ENCODE measurements at regions of chr2 and their contacts with region 1.

Region 1: GRCh38 chr2:237072067-237072931 is 13.4 kb upstream of the COPS8 start:
- DNase-seq: peak; percentile 57 to 67 (median 62)
- ATAC-seq: peak; percentile 76
- H3K4me3 ChIP-seq: no peak overlapping the region
- H3K27ac ChIP-seq: no peak overlapping the region
- H3K4me1 ChIP-seq: no peaks in the 10 kb centered on the region; a peak in 1 of 5 replicates
- H3K27me3 ChIP-seq: no peaks in the 10 kb centered on the region
- CTCF ChIP-seq: peak; percentile 71 to 83 (median 81)
- EP300 ChIP-seq: no peak
- POLR2A ChIP-seq: no peak
- RAD21 ChIP-seq: peak; percentile 22 to 64; a peak in 3 of 4 replicates

Region 2: DNA sequence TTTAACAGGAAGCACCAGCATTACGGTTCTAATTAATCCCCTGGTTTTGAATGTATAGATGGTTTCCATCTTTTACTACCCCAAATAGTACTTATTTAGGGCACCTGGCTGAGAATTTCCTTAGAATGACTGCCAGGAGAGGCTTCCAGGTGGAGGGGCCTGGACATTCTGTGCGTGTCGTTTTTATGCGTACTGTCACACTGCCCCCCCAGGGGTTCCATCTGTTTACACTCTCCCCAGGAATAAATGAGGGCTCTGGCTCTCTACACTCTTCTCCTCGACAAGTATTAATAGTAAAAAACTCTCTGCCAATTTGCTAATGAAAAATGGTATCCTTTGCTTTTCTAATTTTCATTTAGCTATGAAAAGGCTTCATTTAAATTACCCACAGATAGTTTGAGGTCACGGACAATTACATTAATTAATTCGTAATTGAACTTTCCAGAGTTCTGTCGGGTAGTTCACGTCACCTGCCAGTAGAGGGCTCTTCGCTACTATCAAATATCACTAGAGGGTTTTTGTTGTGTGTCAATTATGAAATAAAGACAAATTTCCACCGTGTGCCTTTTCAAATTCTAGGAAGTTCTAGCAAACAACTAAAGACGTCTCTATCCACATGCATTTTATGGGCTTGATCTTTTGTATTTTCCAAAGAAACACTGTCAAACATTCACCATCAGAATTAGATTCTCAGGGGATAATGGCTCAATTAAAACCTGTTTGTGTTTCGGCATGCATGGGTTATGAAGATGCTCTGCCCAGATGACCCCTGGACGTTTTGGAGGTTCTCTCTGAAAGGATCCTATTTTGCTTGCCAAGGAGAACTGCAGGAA is 719.3 kb before region 1 on chr2:
- CTCF ChIA-PET with region 1: interaction called, 6 read pairs
- POLR2A ChIA-PET with region 1: no interaction called
- in situ Hi-C with region 1: loop called (anchors 10 kb)
- intact Hi-C with region 1: loop called (anchors 5 kb)
- DNase-seq: peak; percentile 11 to 23 (median 18)
- ATAC-seq: 0 out of 3 replicates have a peak, but pooled peaks have one; percentile 42
- H3K4me3 ChIP-seq: no peak overlapping the region
- H3K27ac ChIP-seq: no peak overlapping the region
- H3K4me1 ChIP-seq: no peaks in the 10 kb centered on the region
- H3K27me3 ChIP-seq: peaks cover 0 to 24% of the 10 kb centered on the region in 2 experiments; a peak in 2 of 5 replicates
- CTCF ChIP-seq: peak; percentile 41 to 78 (median 69); a peak in 5 of 6 replicates
- EP300 ChIP-seq: no peak
- POLR2A ChIP-seq: no peak
- RAD21 ChIP-seq: peak; percentile 51 to 70

Region 3: DNA sequence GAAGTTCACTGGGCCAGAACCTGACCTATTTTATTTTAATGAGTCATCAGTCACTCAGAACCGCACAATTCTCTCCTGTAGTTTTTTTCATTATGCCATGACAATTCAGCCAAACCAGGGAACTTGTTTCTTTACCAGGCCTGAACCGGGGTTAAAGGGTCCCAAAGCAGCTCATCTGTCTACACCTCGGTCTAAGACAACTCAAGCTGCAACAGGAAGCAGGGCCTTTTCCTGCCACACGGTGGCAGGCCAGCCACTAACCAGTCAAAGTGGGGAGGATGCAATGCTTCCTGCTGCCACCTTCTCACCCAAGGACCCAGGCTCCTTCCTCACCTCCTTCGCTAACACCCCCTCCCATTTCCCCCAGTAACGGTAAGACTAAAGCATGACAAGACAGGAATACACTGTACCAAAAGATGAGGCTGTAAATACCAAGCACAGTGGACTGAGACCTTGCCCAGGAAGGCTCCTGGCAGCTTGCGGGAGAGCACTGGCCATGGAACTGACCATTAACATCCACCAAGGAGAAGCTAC is 559.3 kb before region 1 on chr2:
- CTCF ChIA-PET with region 1: no interaction called
- POLR2A ChIA-PET with region 1: no interaction called
- in situ Hi-C with region 1: loop called (anchors 25 kb)
- intact Hi-C with region 1: no loop called
- DNase-seq: peak; percentile 7 to 51 (median 32)
- ATAC-seq: peak; percentile 84
- H3K4me3 ChIP-seq: no peak overlapping the region
- H3K27ac ChIP-seq: no peak overlapping the region
- H3K4me1 ChIP-seq: no peaks in the 10 kb centered on the region
- H3K27me3 ChIP-seq: no peaks in the 10 kb centered on the region; a peak in 1 of 5 replicates
- CTCF ChIP-seq: peak; percentile 43 to 62 (median 53)
- EP300 ChIP-seq: no peak
- POLR2A ChIP-seq: no peak
- RAD21 ChIP-seq: peak in 1 of 2 experiments; percentile 43; a peak in 3 of 4 replicates

Measured in K562 (cell line).